GM12878 (cell line): ENCODE measurements at regions of chr5 and their contacts with region 1.

Region 1: DNA sequence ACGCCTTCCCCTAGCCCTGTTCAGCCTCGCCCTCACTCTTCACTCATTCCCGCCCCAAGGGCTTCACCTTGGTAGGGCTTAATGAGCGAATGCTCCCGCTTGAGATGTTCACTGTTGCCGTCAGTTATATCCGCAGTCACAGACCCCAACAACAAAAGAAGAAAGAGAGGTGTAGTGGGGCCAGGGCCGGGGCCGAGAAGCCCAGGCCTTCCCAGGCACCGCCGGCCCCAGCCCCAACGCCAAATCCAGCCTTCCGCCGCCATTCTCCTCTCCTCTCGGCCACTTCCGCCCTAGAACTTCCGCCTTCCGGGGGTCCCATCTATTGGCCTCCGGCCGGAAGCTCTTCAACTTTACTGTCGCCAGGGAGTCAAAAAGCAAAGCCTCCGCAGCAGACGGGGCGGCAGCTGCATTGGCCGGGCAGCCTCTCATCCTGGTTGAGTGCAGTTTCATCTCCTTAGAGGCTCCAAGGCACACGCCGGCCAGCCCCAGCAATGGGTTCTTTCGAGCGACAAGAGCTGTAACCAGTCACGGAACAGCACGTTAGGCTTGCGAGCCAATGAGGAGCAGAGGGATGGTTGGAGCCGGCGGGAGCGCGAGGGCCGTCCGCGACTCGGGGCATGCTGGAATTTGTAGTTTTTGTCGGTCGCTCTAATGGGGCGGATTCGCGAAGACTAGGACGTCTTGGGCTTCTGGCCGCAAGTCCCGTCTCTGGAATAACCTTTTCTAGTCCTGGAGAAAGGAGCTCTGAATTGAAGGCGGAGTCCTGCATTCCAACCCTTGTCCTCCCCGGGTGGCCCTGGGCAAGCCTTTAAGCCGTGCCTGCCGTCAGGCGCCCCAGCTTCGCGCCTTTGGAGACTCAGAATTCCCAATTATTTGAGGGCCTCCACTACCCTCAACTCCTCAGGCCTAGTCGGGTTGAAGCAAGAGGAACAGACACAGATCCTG is at the start of gene LMAN2:
- DNase-seq: peak; percentile 93
- ATAC-seq: peak; percentile 99
- H3K4me3 ChIP-seq: peak within 1 kb of the TSS; percentile 98
- H3K27ac ChIP-seq: peak within 1 kb of the TSS; percentile 89
- H3K4me1 ChIP-seq: peaks cover 21% of the 10 kb centered on the region
- H3K27me3 ChIP-seq: no peaks in the 10 kb centered on the region
- CTCF ChIP-seq: no peak
- EP300 ChIP-seq: no peak
- POLR2A ChIP-seq: peak; percentile 88
- RAD21 ChIP-seq: no peak
- polyA plus RNA-seq, gene LMAN2: 2.4 to 11.4 TPM

Region 2: DNA sequence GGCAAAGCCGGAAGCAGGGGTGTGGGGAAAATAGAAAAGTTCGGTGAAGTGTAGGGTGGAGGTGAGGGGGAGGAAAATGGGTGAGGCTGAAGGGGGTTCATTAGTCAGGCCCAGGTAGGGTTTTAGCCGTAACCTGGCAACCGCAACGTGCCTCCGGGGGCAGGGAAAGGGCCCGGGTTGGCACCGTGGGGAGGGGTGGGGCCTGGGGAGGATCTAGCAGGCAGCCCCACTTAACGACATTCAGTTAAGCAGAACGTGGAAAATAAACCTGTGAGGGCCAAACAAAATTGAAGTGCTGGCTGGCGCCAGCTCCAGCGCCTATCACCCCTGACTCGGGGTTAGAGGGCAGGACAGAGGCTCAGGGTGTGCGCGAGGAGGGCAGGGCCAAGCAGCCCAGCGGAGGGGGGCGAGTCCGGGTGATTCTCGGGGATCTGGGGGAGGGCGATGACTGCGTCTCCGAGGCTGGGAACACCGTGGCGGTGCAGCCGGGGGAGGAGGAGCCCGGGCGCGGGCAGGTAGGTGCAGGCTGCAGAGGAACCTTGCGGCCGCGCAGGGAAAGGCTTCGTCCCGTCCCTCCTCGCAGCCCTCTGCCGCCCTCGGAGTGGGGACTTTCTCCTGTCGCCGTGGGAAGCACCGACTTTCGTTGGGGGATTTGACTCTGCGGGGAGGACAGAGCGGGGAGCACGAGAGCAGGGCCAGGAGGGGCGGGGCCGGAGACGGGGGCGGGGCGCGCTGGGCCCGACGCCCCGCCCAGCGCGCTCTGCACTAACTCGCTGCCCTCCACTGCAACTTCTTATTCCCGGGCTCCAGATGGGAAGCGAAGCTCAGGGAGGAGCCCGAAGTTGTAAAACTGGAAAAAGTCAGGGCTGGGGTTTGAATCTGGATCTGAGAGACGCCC is 11.2 kb after region 1 on chr5:
- CTCF ChIA-PET with region 1: interaction called, 15 read pairs
- POLR2A ChIA-PET with region 1: interaction called, 22 read pairs
- RAD21 ChIA-PET with region 1: interaction called, 16 read pairs
- SMC1A ChIA-PET with region 1: interaction called, 12 read pairs
- in situ Hi-C with region 1: no loop called
- intact Hi-C with region 1: no loop called
- DNase-seq: no peak
- ATAC-seq: peak; percentile 72
- H3K4me3 ChIP-seq: peak overlapping the region; percentile 63
- H3K27ac ChIP-seq: peak overlapping the region; percentile 91
- H3K4me1 ChIP-seq: peaks cover 59% of the 10 kb centered on the region
- H3K27me3 ChIP-seq: no peaks in the 10 kb centered on the region
- CTCF ChIP-seq: no peak; a peak in 1 of 6 replicates
- EP300 ChIP-seq: no peak; a peak in 1 of 4 replicates
- POLR2A ChIP-seq: peak; percentile 59
- RAD21 ChIP-seq: no peak

Region 3: GRCh38 chr5:177592010-177592834 is 240.6 kb after region 1 on chr5 and contains the start of gene TMED9:
- CTCF ChIA-PET with region 1: no interaction called
- POLR2A ChIA-PET with region 1: no interaction called
- RAD21 ChIA-PET with region 1: no interaction called
- SMC1A ChIA-PET with region 1: no interaction called
- in situ Hi-C with region 1: no loop called
- intact Hi-C with region 1: no loop called
- DNase-seq: no peak
- ATAC-seq: peak; percentile 99
- H3K4me3 ChIP-seq: peak within 1 kb of the TSS; percentile 88
- H3K27ac ChIP-seq: peak within 1 kb of the TSS; percentile 85
- H3K4me1 ChIP-seq: peaks cover 8% of the 10 kb centered on the region
- H3K27me3 ChIP-seq: no peaks in the 10 kb centered on the region
- CTCF ChIP-seq: no peak; a peak in 1 of 6 replicates
- EP300 ChIP-seq: no peak
- POLR2A ChIP-seq: peak; percentile 98
- RAD21 ChIP-seq: no peak
- polyA plus RNA-seq, gene TMED9: 35.7 to 46.6 TPM